ENCODE measurements at regions of chr12 and their contacts with region 1.

Region 1: GRCh38 chr12:48165094-48165981 is 8.0 kb upstream of the ASB8 start:
- DNase-seq: peak; percentile 72
- H3K4me3 Mint-ChIP-seq: no peak overlapping the region
- H3K27ac Mint-ChIP-seq: no peak overlapping the region
- H3K4me1 Mint-ChIP-seq: no peaks in the 10 kb centered on the region
- H3K27me3 Mint-ChIP-seq: peaks cover 11% of the 10 kb centered on the region
- CTCF ChIP-seq: peak; percentile 87

Region 2: DNA sequence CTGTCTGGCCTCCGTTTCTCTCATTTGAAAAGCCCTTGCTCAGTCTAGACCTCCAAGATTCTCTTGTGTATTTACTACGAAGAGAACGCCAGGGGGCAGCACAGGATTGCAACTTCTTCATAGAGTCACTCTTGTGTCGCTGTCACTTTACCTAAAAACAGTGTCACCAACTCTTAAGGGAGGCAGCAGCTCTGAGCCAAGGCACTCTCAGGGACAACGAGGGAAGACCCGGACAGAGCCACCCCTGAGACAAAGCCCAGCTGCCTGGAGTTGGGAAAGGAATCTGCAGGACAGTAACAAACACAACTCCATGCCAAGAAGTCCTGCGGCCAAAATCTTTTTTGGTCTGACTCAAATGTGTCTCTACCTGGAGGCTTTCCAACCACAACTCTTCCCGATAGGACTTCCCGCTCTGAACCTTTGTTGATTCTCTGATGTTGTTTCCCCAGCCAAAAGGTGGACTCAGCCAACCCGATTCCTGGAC is 449.9 kb before region 1 on chr12:
- CTCF ChIA-PET with region 1: no interaction called
- POLR2A ChIA-PET with region 1: no interaction called
- intact Hi-C with region 1: loop called (anchors 5 kb)
- DNase-seq: peak; percentile 97
- H3K4me3 Mint-ChIP-seq: peak overlapping the region; percentile 63
- H3K27ac Mint-ChIP-seq: no peak overlapping the region
- H3K4me1 Mint-ChIP-seq: peaks cover 15% of the 10 kb centered on the region
- H3K27me3 Mint-ChIP-seq: no peaks in the 10 kb centered on the region
- CTCF ChIP-seq: peak; percentile 85

Region 3: DNA sequence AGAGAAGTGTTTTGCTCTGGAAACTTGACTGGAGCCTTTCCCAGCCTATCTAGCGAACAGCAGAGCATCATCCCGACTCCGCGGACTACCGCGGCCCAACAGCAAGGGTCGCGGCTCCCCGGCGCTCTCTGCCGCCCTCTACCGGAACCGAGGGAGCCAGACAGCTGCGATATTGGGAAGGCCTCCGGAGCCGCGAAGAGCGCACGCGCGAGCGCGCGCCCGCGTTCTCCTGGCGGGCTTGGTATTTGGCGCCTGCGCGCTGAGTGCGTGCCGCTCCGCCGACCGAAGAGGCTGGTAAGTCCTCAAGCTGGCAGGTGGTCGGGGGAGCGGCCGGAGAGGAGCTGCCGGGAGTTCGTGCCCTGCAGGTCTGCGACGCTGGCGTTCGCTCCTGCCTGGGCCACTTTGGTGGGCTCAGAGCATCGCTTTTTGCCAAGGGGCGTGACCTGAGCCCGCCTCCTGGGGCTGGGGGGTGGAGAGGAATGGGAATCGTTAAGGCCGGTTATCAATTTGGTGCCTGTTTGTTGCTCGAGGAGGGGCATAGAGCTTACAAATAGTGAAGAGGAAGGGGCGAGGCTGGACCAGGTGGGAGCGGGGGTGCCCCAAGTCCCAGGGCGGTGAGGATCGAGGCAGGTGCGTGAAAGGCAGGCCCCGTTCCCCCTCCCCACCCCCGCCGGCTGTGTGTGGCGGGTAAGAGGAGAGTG is 201.8 kb before region 1 on chr12 and contains the start of gene TMEM106C:
- CTCF ChIA-PET with region 1: interaction called, 7 read pairs
- POLR2A ChIA-PET with region 1: interaction called, 3 read pairs
- intact Hi-C with region 1: loop called (anchors 1 kb)
- DNase-seq: peak; percentile 87
- H3K4me3 Mint-ChIP-seq: peak within 1 kb of the TSS; percentile 98
- H3K27ac Mint-ChIP-seq: peak within 1 kb of the TSS; percentile 66
- H3K4me1 Mint-ChIP-seq: peaks cover 15% of the 10 kb centered on the region
- H3K27me3 Mint-ChIP-seq: no peaks in the 10 kb centered on the region
- CTCF ChIP-seq: peak; percentile 95
- total RNA-seq, gene TMEM106C: 39.0 and 50.0 TPM in 2 replicates

Region 4: DNA sequence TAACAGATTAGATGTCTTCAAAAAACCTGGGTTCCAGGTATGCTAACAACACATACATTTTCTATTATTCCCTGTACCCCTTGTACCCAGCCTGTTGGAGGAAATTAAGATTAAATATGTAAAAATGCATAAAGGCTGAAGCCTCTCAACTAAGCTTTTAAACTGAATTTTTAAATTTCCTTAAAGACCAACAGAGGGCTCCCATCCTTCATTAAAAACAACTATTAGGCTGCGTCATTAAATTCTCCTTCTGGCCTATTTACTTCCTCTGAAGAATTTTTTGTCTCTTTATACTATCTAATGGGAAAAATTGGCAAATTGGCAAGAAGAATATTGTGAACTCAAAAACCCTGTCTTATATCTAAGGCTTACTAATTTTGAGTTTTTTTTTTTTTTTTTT is 81.3 kb before region 1 on chr12:
- CTCF ChIA-PET with region 1: interaction called, 9 read pairs
- POLR2A ChIA-PET with region 1: no interaction called
- intact Hi-C with region 1: loop called (anchors 1 kb)
- DNase-seq: peak; percentile 6
- H3K4me3 Mint-ChIP-seq: no peak overlapping the region
- H3K27ac Mint-ChIP-seq: no peak overlapping the region
- H3K4me1 Mint-ChIP-seq: no peaks in the 10 kb centered on the region
- H3K27me3 Mint-ChIP-seq: no peaks in the 10 kb centered on the region
- CTCF ChIP-seq: no peak

Region 5: GRCh38 chr12:48175613-48176416 is 10.5 kb after region 1 on chr12:
- CTCF ChIA-PET with region 1: interaction called, 10 read pairs
- POLR2A ChIA-PET with region 1: no interaction called
- intact Hi-C with region 1: no loop called
- DNase-seq: no peak
- H3K4me3 Mint-ChIP-seq: no peak overlapping the region
- H3K27ac Mint-ChIP-seq: no peak overlapping the region
- H3K4me1 Mint-ChIP-seq: peaks cover 11% of the 10 kb centered on the region
- H3K27me3 Mint-ChIP-seq: peaks cover 58% of the 10 kb centered on the region
- CTCF ChIP-seq: no peak

Region 6: DNA sequence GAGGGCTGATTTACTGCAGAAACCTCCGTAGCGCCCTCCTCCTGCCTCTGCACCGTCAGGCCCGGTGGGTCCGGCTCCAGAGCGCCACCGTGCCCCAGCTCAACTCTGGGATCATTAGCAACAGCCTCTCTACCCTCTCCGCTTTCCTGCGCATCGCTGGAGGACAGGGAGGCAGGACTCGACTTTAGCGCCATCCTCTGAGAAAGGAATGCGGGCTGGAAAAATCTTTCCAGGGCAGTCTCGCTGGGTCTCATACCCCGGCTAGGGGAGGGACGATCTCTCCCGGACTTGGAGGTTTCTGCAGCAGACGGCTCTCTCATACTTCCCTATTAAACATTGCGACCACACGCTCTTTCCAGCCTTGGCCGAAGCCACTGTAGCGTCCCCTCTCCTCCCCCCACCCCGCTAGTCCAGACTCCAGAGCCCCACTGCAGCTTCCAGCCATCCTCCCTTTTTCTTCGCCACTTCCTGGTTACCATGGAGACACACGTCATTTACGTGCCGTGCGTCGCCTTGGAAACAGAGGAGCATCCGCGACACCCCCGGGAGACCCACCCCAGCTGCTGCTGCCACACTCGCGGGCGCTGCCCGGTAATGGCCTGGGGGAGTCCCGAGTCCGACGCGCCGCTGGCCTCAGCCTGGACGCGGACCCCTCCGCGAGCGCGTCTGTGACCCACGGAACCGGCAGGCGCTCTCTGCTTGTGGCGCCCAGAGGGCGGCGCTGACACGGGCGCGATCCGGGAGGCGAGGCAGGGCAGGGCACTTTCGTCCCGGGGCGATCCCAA is 17.9 kb after region 1 on chr12 and contains the start of gene CCDC184:
- CTCF ChIA-PET with region 1: interaction called, 21 read pairs
- POLR2A ChIA-PET with region 1: no interaction called
- intact Hi-C with region 1: no loop called
- DNase-seq: no peak
- H3K4me3 Mint-ChIP-seq: peak within 1 kb of the TSS; percentile 70
- H3K27ac Mint-ChIP-seq: no peak within 1 kb of the TSS
- H3K4me1 Mint-ChIP-seq: peaks cover 5% of the 10 kb centered on the region
- H3K27me3 Mint-ChIP-seq: peaks cover 80% of the 10 kb centered on the region
- CTCF ChIP-seq: no peak
- total RNA-seq, gene CCDC184: not detected in 2 replicates

Region 7: GRCh38 chr12:48189331-48190125 is 24.2 kb after region 1 on chr12:
- CTCF ChIA-PET with region 1: interaction called, 21 read pairs
- POLR2A ChIA-PET with region 1: no interaction called
- intact Hi-C with region 1: no loop called
- DNase-seq: peak; percentile 78
- H3K4me3 Mint-ChIP-seq: no peak overlapping the region
- H3K27ac Mint-ChIP-seq: no peak overlapping the region
- H3K4me1 Mint-ChIP-seq: peaks cover 5% of the 10 kb centered on the region
- H3K27me3 Mint-ChIP-seq: peaks cover 67% of the 10 kb centered on the region
- CTCF ChIP-seq: peak; percentile 78

Measured in MCF 10A (cell line).